Endothelial cell of umbilical vein (primary cell): ENCODE measurements at regions of chr9 and their contacts with region 1.

Region 1: GRCh38 chr9:83219152-83219923 is 156.4 kb upstream of the RASEF start:
- DNase-seq: peak; percentile 84
- H3K4me3 ChIP-seq: peak overlapping the region; percentile 45 to 100 (median 98)
- H3K27ac ChIP-seq: peak overlapping the region; percentile 66
- H3K4me1 ChIP-seq: peaks cover 23% of the 10 kb centered on the region
- H3K27me3 ChIP-seq: no peaks in the 10 kb centered on the region
- CTCF ChIP-seq: peak; percentile 43 to 63
- POLR2A ChIP-seq: peak; percentile 41

Region 2: DNA sequence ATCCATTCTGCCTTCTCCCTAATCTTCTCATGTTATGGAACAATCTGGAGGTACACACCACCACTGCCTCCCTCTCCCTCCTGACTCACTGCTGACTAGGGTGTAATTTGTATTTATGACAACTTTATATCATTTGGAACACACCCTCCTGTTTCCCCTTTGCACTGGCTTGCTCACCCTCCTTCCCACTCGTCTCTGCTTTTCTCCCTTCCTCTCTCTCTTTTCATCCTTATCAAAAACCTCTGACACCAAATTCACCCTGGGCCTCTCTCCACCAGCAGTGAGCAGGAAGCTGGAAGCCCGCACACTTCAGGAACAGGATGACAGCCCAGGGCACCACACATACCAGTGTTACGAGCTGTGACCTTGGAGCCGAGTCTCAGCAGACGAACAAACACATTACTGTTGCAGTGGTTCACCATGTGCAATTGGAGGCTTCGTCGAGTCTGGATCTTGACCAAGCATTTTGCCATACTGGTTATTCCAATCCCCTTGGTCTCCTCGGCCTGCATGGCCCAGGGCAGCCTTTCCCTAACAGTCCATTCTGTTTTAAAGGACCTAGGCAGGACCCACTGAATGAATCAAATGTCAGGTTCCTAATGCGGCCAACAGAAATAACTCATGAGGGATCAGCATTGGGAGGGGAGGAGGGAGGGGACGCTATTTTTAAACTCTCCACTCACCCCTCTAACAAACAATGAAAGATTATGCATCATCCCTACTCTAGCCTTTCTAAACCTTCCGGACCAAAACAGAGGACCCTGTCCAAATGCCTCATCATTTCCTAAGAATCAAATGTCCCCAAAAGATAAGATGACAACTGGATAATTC is 47.5 kb after region 1 on chr9:
- CTCF ChIA-PET with region 1: interaction called, 15 read pairs
- POLR2A ChIA-PET with region 1: no interaction called
- dilution Hi-C with region 1: no loop called
- intact Hi-C with region 1: loop called (anchors 1 kb)
- DNase-seq: peak; percentile 67
- H3K4me3 ChIP-seq: peak overlapping the region in 1 of 3 experiments; percentile 60
- H3K27ac ChIP-seq: peak overlapping the region; percentile 79
- H3K4me1 ChIP-seq: peaks cover 72% of the 10 kb centered on the region
- H3K27me3 ChIP-seq: no peaks in the 10 kb centered on the region
- CTCF ChIP-seq: no peak
- POLR2A ChIP-seq: peak; percentile 61

Region 3: DNA sequence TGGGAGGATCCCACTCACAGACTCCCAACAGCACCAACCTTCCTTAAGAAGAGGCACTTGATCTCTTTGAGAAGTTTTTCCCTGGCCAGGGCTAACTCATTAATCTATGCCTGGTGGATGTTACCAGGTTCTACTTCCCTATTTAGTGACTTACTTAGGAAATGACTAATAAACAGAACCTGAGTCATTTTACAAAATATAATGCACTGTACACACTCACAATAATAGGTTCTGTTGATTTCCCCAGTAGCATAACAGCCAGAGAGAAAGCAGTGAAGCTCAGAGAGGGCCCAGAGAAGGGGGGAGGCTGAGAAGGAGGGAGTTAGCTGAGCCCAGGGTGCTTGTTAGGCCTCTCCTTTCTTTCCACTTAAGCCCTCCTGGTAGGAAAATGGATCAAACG is 291.7 kb after region 1 on chr9:
- CTCF ChIA-PET with region 1: interaction called, 3 read pairs
- POLR2A ChIA-PET with region 1: no interaction called
- dilution Hi-C with region 1: no loop called
- intact Hi-C with region 1: loop called (anchors 1 kb)
- DNase-seq: peak; percentile 80
- H3K4me3 ChIP-seq: no peak overlapping the region
- H3K27ac ChIP-seq: peak overlapping the region; percentile 32
- H3K4me1 ChIP-seq: peaks cover 19% of the 10 kb centered on the region
- H3K27me3 ChIP-seq: no peaks in the 10 kb centered on the region
- CTCF ChIP-seq: no peak
- POLR2A ChIP-seq: no peak

Region 4: GRCh38 chr9:83544002-83544698 is 324.8 kb after region 1 on chr9:
- CTCF ChIA-PET with region 1: interaction called, 267 read pairs
- POLR2A ChIA-PET with region 1: no interaction called
- dilution Hi-C with region 1: no loop called
- intact Hi-C with region 1: loop called (anchors 1 kb)
- DNase-seq: peak; percentile 65
- H3K4me3 ChIP-seq: no peak overlapping the region
- H3K27ac ChIP-seq: no peak overlapping the region
- H3K4me1 ChIP-seq: no peaks in the 10 kb centered on the region
- H3K27me3 ChIP-seq: peaks cover 2% of the 10 kb centered on the region in 2 experiments
- CTCF ChIP-seq: peak; percentile 70 to 75
- POLR2A ChIP-seq: no peak

Region 5: DNA sequence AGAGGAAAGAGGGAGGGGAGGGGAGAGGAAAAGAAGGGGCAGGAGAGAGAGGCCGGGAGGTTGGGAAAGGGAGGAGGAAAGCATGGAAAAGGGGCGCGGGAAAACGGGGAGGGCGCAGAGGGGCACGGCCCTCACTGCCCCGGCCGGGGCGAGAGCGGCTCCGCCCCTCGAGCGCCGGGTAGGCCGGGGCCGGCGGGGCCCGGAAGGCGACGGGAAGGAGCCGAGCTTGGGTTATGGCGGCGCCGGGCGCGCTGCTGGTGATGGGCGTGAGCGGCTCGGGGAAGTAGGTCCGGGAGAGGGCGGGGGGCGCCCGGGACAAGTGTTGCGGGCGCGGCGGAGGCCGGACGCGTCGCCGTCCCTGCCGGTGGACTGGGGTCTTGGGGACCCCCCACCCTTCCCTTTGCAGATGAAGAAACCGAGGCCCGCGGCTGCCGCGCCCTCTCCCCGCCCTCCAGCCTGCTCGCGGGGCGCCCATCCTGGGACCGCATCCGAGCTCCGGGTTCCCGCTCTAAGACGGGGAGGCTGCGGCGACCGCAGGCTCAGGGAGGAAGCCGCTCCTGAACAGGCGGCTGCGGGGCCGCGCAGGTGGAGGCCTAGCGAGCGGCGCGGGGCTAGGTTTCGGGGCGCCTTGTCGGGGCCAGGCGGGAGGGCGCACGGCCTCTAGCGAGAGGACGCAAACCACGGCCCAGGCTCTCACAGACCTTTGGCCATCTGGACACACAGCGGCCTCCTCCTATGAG is 403.8 kb after region 1 on chr9 and contains the start of gene IDNK:
- CTCF ChIA-PET with region 1: interaction called, 13 read pairs
- POLR2A ChIA-PET with region 1: no interaction called
- dilution Hi-C with region 1: no loop called
- intact Hi-C with region 1: no loop called
- DNase-seq: peak; percentile 53
- H3K4me3 ChIP-seq: peak within 1 kb of the TSS; percentile 71 to 83 (median 81)
- H3K27ac ChIP-seq: peak within 1 kb of the TSS; percentile 68
- H3K4me1 ChIP-seq: peaks cover 10% of the 10 kb centered on the region
- H3K27me3 ChIP-seq: peaks cover 1 to 3% of the 10 kb centered on the region in 2 experiments
- CTCF ChIP-seq: no peak
- POLR2A ChIP-seq: peak; percentile 26
- total RNA-seq, gene IDNK: 3.4 and 4.5 TPM in 2 replicates

Region 6: DNA sequence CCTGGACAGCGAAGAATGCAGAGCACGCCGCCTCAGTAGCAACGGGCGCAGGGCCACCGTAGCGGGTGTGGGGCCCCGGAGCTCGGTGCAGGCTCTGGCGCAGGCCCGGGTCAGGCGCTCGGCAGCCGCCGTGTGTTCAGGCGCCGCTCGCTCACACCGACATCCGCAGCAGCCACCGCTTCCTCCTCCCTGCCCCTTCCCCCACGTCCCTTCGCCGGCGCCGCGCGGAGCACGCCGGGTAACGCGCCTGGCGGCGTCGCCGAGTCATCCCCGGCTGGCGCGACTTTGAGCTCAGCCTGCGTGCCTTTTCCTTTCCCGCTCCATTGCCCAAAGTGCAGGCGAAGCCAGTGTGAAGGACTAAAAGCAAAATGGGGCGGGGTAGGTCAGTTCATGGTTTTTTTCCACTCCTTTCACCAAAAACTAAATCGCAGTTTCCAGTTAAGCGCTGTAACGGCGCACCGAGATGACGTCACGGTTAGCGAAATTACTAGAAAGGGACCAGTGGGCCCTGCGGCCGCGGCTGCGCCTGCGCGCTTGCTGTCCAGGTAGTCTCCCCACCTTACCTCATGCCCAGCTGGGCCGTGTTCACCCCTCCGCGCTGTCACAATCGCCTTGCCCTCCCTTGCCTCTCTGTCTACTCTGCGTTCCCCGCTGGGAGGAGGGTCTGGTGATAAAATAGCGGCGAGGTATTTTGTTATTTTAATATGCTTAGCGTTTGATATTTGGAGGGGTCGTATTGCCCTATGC is 488.6 kb after region 1 on chr9 and contains the start of gene UBQLN1:
- CTCF ChIA-PET with region 1: no interaction called
- POLR2A ChIA-PET with region 1: no interaction called
- dilution Hi-C with region 1: no loop called
- intact Hi-C with region 1: loop called (anchors 2 kb)
- DNase-seq: peak; percentile 93
- H3K4me3 ChIP-seq: peak within 1 kb of the TSS; percentile 18 to 100 (median 57)
- H3K27ac ChIP-seq: peak within 1 kb of the TSS; percentile 99
- H3K4me1 ChIP-seq: peaks cover 16% of the 10 kb centered on the region
- H3K27me3 ChIP-seq: no peaks in the 10 kb centered on the region
- CTCF ChIP-seq: no peak
- POLR2A ChIP-seq: peak; percentile 93
- total RNA-seq, gene UBQLN1: 101 and 110 TPM in 2 replicates